Naive thymus-derived CD4-positive, alpha-beta T cell (primary cell): ENCODE measurements at regions of chr22 and their contacts with region 1.

Region 1: DNA sequence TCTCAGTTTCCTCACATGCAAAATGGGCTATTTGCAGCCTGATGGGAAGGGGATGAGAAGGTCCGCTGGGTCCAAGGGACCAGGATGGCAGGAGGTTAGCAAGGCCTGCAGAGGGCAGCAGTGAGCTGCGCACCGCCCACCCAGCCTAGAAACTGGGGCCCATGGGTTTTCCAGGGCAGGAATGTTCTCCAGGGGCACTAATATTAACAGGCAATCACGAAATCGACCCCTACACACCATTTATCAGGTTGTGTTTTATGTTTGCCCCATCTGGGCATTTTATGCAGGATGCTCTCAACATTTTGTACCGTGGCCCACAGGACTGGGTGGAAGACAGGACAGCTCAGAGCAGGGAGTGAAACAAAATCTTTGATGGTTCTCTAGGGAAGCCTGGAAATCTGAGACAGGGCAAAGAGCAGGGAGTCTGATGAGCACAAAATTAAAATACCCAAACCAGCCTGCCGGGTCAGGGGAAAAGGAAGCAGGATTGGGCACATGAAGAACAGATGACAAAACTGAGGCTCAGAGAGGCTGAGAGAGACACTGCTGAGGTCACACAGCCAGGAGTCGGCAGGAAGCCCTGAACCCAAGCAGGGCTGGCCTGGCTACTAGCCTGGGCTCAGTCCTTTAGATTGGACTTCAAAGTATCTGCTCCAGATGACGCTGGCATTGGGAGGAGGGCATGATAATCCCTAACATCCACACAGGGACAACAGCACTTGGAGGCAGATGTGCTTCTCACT is 1.6 kb upstream of the BCR start:
- DNase-seq: peak in 8 of 9 donors; percentile 38 to 76 (median 62)
- ATAC-seq: peak; percentile 54
- H3K4me3 ChIP-seq: no peak overlapping the region
- H3K4me3 Mint-ChIP-seq: peak overlapping the region; percentile 70 to 90 (median 80)
- H3K27ac ChIP-seq: no peak overlapping the region
- H3K27ac Mint-ChIP-seq: peak overlapping the region; percentile 56 to 95 (median 82)
- H3K4me1 ChIP-seq: peaks cover 22 to 39% of the 10 kb centered on the region in 2 donors
- H3K4me1 Mint-ChIP-seq: peaks cover 43 to 57% (median 51%) of the 10 kb centered on the region in 7 donors
- H3K27me3 ChIP-seq: no peaks in the 10 kb centered on the region
- H3K27me3 Mint-ChIP-seq: peaks cover 0 to 2% (median 0%) of the 10 kb centered on the region in 5 donors

Region 2: DNA sequence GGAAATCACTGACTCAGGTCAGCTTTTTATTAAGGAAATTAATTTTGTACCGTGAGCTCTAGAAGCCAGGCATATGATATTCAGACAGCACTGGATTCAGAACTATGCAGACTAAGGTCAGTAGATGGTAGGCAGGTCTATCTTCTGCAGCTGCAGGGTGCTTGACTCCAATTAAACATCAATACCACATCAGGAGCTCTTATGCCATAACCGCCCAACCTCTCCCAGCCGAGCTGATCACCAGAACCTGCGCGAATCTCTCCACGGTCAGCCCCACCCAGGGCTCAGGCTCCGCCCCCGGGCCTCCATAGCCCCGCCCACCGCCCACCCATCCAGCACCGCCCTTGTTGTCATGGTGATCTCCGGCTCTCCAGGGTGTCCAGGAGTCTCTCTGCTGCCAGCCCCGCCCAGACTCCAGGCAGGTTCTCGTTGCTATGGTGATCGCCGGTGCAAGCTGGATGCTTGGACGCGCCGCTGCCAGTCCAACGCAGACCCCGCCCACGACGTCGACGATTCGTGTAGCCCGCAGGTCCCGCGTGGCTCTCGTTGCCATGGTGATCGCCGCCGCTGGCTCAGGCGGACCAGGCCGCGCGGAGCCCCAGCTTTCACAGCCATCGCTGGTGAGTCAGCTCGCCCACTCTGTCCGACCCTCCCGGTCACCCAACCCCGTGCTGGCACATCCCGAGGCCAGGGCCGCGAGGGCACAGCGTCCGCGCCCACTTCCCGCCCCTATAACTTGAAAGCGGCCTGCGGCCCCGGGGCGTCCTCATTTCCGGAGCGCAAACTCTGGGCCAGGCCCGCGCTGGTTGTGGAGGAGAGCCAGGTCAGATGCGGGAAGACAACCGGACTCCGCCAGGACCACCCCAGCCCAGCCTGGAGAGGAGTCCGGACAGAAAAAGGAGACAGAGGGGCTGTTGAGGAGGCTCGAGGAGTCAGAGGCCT is 33.5 kb before region 1 on chr22 and contains the start of gene RAB36:
- CTCF ChIA-PET with region 1: interaction called, 5 read pairs
- POLR2A ChIA-PET with region 1: interaction called, 5 read pairs
- intact Hi-C with region 1: loop called (anchors 1 to 2 kb)
- DNase-seq: peak; percentile 77 to 93 (median 81)
- ATAC-seq: peak; percentile 78
- H3K4me3 ChIP-seq: peak within 1 kb of the TSS; percentile 25
- H3K4me3 Mint-ChIP-seq: peak within 1 kb of the TSS; percentile 72 to 84 (median 82)
- H3K27ac ChIP-seq: peak within 1 kb of the TSS; percentile 78
- H3K27ac Mint-ChIP-seq: peak within 1 kb of the TSS; percentile 79 to 96 (median 93)
- H3K4me1 ChIP-seq: peaks cover 38 to 45% of the 10 kb centered on the region in 2 donors
- H3K4me1 Mint-ChIP-seq: peaks cover 27 to 60% (median 49%) of the 10 kb centered on the region in 7 donors
- H3K27me3 ChIP-seq: no peaks in the 10 kb centered on the region
- H3K27me3 Mint-ChIP-seq: peaks cover 0 to 20% (median 0%) of the 10 kb centered on the region in 5 donors
- total RNA-seq, gene RAB36: 0.10 to 1.2 (median 0.38) TPM

Region 3: GRCh38 chr22:23225724-23226496 is 47.2 kb after region 1 on chr22:
- CTCF ChIA-PET with region 1: no interaction called
- POLR2A ChIA-PET with region 1: interaction called, 7 read pairs
- intact Hi-C with region 1: loop called in 1 of 2 experiments (anchors 1 kb)
- DNase-seq: peak in 7 of 9 donors; percentile 59 to 84 (median 73)
- ATAC-seq: peak; percentile 81
- H3K4me3 ChIP-seq: no peak overlapping the region
- H3K4me3 Mint-ChIP-seq: peak overlapping the region; percentile 51 to 83 (median 72)
- H3K27ac ChIP-seq: peak overlapping the region; percentile 67
- H3K27ac Mint-ChIP-seq: peak overlapping the region; percentile 69 to 96 (median 82)
- H3K4me1 ChIP-seq: peaks cover 14 to 78% of the 10 kb centered on the region in 2 donors
- H3K4me1 Mint-ChIP-seq: peaks cover 62 to 99% (median 93%) of the 10 kb centered on the region in 7 donors
- H3K27me3 ChIP-seq: no peaks in the 10 kb centered on the region
- H3K27me3 Mint-ChIP-seq: no peaks in the 10 kb centered on the region

Region 4: DNA sequence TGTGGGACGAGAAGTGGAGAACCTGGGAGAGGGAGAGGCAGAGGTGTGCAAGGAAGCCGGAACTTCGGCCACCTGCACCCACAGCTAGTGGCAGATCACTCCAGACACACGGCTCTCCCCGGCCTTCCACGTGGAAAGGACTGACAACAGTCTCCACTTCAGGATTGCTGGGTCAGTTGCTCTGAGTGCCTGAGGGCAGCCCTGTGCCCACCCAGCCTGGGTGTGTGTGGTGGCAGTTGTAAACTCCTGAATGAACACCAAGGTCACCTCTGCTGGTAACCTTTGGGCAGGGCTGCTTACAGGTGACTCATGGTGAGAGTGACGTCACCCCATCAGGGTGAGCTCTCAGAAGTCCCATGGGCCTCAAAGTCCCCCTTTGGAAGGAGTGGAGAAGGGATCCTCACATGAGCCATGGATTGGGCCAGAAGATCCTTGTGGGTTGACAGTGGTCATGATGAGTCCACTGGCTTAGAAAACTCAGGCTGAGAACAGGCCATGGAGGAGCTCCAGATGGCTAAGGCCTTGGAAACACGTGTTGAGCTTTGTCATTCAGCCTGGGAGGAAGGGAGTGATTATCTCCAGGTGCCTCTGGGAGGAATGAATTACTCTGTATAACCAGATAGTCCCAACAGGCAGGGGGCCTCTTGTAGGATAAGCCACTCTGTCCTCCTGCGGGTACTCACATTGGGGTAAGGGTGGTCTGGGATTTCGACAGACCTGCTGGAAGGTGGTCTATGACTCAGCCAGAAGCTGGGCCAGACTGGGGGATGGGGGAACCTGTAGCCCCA is 73.0 kb after region 1 on chr22:
- CTCF ChIA-PET with region 1: interaction called, 11 read pairs
- POLR2A ChIA-PET with region 1: interaction called, 4 read pairs
- intact Hi-C with region 1: loop called in 1 of 2 experiments (anchors 2 kb)
- DNase-seq: no peak
- ATAC-seq: no peak
- H3K4me3 ChIP-seq: no peak overlapping the region
- H3K4me3 Mint-ChIP-seq: no peak overlapping the region
- H3K27ac ChIP-seq: no peak overlapping the region
- H3K27ac Mint-ChIP-seq: peak overlapping the region in 3 of 9 donors; percentile 48 to 56 (median 51)
- H3K4me1 ChIP-seq: peaks cover 20 to 23% of the 10 kb centered on the region in 2 donors
- H3K4me1 Mint-ChIP-seq: peaks cover 34 to 73% (median 51%) of the 10 kb centered on the region in 7 donors
- H3K27me3 ChIP-seq: no peaks in the 10 kb centered on the region
- H3K27me3 Mint-ChIP-seq: no peaks in the 10 kb centered on the region

Region 5: GRCh38 chr22:23289851-23290724 is 111.4 kb after region 1 on chr22:
- CTCF ChIA-PET with region 1: interaction called, 15 read pairs
- POLR2A ChIA-PET with region 1: interaction called, 3 read pairs
- intact Hi-C with region 1: loop called (anchors 1 to 2 kb)
- DNase-seq: peak; percentile 13 to 67 (median 45)
- ATAC-seq: peak; percentile 71
- H3K4me3 ChIP-seq: no peak overlapping the region
- H3K4me3 Mint-ChIP-seq: no peak overlapping the region
- H3K27ac ChIP-seq: no peak overlapping the region
- H3K27ac Mint-ChIP-seq: peak overlapping the region in 2 of 9 donors; percentile 51 to 55
- H3K4me1 ChIP-seq: no peaks in the 10 kb centered on the region
- H3K4me1 Mint-ChIP-seq: peaks cover 0 to 5% (median 0%) of the 10 kb centered on the region in 7 donors
- H3K27me3 ChIP-seq: no peaks in the 10 kb centered on the region
- H3K27me3 Mint-ChIP-seq: no peaks in the 10 kb centered on the region

Region 6: GRCh38 chr22:23521441-23522113 is 342.9 kb after region 1 on chr22:
- CTCF ChIA-PET with region 1: no interaction called
- POLR2A ChIA-PET with region 1: no interaction called
- intact Hi-C with region 1: loop called in 1 of 2 experiments (anchors 10 kb)
- DNase-seq: peak in 8 of 9 donors; percentile 25 to 66 (median 36)
- ATAC-seq: peak; percentile 92
- H3K4me3 ChIP-seq: peak overlapping the region; percentile 9
- H3K4me3 Mint-ChIP-seq: peak overlapping the region; percentile 35 to 83 (median 74)
- H3K27ac ChIP-seq: no peak overlapping the region
- H3K27ac Mint-ChIP-seq: peak overlapping the region in 2 of 9 donors; percentile 31 to 52
- H3K4me1 ChIP-seq: peaks cover 5 to 7% of the 10 kb centered on the region in 2 donors
- H3K4me1 Mint-ChIP-seq: peaks cover 0 to 7% (median 4%) of the 10 kb centered on the region in 7 donors
- H3K27me3 ChIP-seq: peaks cover 0 to 6% of the 10 kb centered on the region in 2 donors
- H3K27me3 Mint-ChIP-seq: peaks cover 22 to 47% (median 30%) of the 10 kb centered on the region in 5 donors

Region 7: GRCh38 chr22:24060375-24060788 is 881.7 kb after region 1 on chr22:
- CTCF ChIA-PET with region 1: no interaction called
- POLR2A ChIA-PET with region 1: no interaction called
- intact Hi-C with region 1: no loop called
- DNase-seq: no peak
- ATAC-seq: no peak
- H3K4me3 ChIP-seq: no peak overlapping the region
- H3K4me3 Mint-ChIP-seq: no peak overlapping the region
- H3K27ac ChIP-seq: no peak overlapping the region
- H3K27ac Mint-ChIP-seq: peak overlapping the region; percentile 18 to 82 (median 63)
- H3K4me1 ChIP-seq: no peaks in the 10 kb centered on the region
- H3K4me1 Mint-ChIP-seq: peaks cover 0 to 12% (median 0%) of the 10 kb centered on the region in 7 donors
- H3K27me3 ChIP-seq: no peaks in the 10 kb centered on the region
- H3K27me3 Mint-ChIP-seq: no peaks in the 10 kb centered on the region